Activated naive CD4-positive, alpha-beta T cell treated with anti-CD3 and anti-CD28 coated beads for 36 hours (primary cell): ENCODE measurements at regions of chr17 and their contacts with region 1.

Region 1: GRCh38 chr17:49390548-49391324 is 23.9 kb downstream of the PHB1 start:
- DNase-seq: peak; percentile 22
- H3K4me3 Mint-ChIP-seq: no peak overlapping the region
- H3K27ac Mint-ChIP-seq: no peak overlapping the region
- H3K4me1 Mint-ChIP-seq: peaks cover 47% of the 10 kb centered on the region
- H3K27me3 Mint-ChIP-seq: no peaks in the 10 kb centered on the region

Region 2: GRCh38 chr17:49230636-49231562 is 159.8 kb before region 1 on chr17 and contains the start of gene PHOSPHO1:
- CTCF ChIA-PET with region 1: interaction called, 5 read pairs
- intact Hi-C with region 1: loop called (anchors 5 kb)
- DNase-seq: peak; percentile 82
- H3K4me3 Mint-ChIP-seq: peak within 1 kb of the TSS; percentile 75
- H3K27ac Mint-ChIP-seq: no peak within 1 kb of the TSS
- H3K4me1 Mint-ChIP-seq: peaks cover 8% of the 10 kb centered on the region
- H3K27me3 Mint-ChIP-seq: peaks cover 16% of the 10 kb centered on the region
- total RNA-seq, gene PHOSPHO1: not detected

Region 3: DNA sequence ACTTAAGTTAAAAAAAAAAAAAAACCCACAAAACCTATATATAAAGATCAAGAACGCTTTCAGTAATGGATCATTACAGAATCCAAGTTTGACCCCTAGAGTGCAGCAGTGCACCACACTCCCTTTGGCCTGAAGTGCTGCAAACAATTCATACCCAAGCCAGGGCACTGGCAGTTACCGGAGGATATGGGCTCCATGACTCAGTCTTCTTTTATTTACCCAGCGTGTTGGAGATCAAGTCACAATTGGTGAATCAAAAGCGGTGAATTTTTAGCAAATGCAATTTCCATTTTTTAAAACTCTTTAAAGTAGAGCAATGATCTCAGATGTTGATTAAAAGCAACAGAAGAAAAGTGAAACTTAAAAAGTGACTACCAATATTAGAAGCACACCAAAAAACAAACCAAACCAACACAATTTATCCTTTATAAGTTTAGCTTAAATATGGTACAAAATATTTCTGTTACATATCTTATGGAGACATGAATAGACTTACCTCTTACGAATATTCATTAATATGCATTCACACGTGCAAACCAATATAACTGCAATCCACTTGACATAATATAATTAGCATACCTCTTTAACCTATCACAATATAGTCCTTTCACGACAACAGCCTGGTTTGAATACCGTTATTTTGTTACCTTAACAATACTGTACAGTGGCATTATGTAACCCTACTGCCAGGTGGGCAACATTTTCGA is 75.0 kb before region 1 on chr17:
- CTCF ChIA-PET with region 1: interaction called, 25 read pairs
- intact Hi-C with region 1: loop called (anchors 1 kb)
- DNase-seq: peak; percentile 91
- H3K4me3 Mint-ChIP-seq: peak overlapping the region; percentile 41
- H3K27ac Mint-ChIP-seq: peak overlapping the region; percentile 62
- H3K4me1 Mint-ChIP-seq: peaks cover 23% of the 10 kb centered on the region
- H3K27me3 Mint-ChIP-seq: no peaks in the 10 kb centered on the region

Region 4: DNA sequence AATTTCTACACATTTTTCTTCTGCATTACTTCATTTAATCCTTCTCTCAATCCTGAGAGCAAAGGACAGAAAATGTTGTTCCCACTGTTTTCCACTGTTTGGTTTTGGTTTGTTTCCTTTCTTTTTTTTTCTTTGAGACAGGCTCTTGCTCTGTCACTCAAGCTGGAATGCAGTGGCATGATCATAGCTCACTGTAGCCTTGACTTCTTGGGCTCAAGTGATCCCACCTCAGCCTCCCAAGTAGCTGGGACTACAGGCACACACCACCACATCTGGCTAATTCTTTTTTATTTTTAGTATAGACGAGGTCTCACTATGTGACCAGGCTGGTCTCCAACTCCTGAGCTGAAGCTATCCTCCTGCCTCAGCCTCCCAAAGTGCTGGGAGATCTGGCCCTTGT is 21.6 kb before region 1 on chr17:
- CTCF ChIA-PET with region 1: interaction called, 26 read pairs
- intact Hi-C with region 1: loop called (anchors 1 kb)
- DNase-seq: no peak
- H3K4me3 Mint-ChIP-seq: no peak overlapping the region
- H3K27ac Mint-ChIP-seq: no peak overlapping the region
- H3K4me1 Mint-ChIP-seq: no peaks in the 10 kb centered on the region
- H3K27me3 Mint-ChIP-seq: no peaks in the 10 kb centered on the region